Activated naive CD4-positive, alpha-beta T cell treated with anti-CD3 and anti-CD28 coated beads for 36 hours (primary cell): ENCODE measurements at regions of chr17 and their contacts with region 1.

Region 1: DNA sequence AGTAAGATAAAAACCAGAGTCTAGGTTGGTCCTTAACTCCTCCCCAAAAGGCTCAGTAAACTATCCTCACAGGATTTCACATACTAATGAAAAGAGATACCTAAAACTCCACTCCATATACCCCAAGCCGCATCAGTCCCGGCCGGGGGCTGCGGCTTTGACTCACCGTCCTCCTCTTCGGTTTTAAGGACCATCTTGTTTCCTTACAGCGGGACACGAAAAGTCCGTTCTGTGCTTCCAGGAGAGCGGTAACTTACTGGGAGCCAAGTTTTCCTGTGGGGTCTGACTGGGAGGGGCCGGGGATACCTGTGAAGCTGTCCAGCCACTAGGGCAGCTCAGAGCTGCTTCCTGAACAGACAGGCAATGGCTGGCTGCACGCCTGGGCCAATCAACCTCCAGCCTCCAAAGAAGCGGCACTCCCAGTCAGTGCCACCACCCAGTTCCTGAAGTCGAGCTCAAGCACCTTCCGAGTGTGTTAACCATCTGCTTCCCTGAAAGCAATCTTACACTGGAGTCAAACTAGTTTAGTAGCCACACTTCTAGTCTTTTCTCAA is 45.5 kb downstream of the CYTH1 start:
- DNase-seq: peak; percentile 84
- H3K4me3 Mint-ChIP-seq: peak overlapping the region; percentile 88
- H3K27ac Mint-ChIP-seq: peak overlapping the region; percentile 93
- H3K4me1 Mint-ChIP-seq: peaks cover 86% of the 10 kb centered on the region
- H3K27me3 Mint-ChIP-seq: no peaks in the 10 kb centered on the region

Region 2: GRCh38 chr17:78716814-78717393 is 19.7 kb before region 1 on chr17:
- CTCF ChIA-PET with region 1: interaction called, 14 read pairs
- intact Hi-C with region 1: loop called (anchors 1 kb)
- DNase-seq: peak; percentile 60
- H3K4me3 Mint-ChIP-seq: peak overlapping the region; percentile 59
- H3K27ac Mint-ChIP-seq: peak overlapping the region; percentile 90
- H3K4me1 Mint-ChIP-seq: peaks cover 89% of the 10 kb centered on the region
- H3K27me3 Mint-ChIP-seq: no peaks in the 10 kb centered on the region

Region 3: DNA sequence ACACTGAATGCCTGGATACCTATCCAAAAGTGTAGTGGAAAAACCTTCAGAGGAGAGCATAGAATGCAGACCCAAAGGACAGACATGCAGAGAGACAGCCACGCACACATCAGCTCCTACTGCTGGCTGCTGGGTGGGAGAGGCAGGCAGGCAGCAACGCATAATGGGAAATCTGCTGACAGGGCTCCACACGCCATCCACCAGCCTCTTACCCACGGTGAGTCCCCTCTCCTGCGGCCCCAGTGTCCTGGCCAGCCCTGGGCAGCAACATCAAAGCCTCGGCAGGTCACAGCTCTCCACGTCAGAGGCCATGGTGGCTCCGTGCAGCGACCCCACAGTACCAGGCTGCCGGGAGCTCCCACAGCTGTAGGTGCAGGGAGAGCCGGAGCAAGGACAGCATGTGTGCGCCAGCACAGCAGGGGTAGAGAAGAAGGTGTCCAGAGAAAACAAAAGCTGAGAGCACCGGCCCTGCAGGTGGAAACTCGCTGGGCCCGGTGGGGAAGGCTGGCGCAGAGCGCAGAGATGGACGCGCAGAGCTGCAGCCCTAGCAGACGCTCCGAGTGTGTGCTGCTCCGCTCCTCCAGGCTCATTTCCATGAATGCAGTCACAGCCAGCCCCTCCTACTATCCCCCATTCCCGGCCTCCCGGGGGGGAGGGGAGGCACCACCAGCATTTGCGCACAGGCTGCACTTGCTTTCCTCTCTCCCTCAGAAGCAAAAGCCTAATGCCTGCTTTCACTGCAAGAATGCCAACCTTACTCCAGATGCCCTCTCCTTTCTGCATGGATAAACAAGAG is 13.4 kb before region 1 on chr17:
- CTCF ChIA-PET with region 1: interaction called, 14 read pairs
- intact Hi-C with region 1: loop called (anchors 1 kb)
- DNase-seq: no peak
- H3K4me3 Mint-ChIP-seq: no peak overlapping the region
- H3K27ac Mint-ChIP-seq: peak overlapping the region; percentile 92
- H3K4me1 Mint-ChIP-seq: peaks cover 97% of the 10 kb centered on the region
- H3K27me3 Mint-ChIP-seq: no peaks in the 10 kb centered on the region

Region 4: DNA sequence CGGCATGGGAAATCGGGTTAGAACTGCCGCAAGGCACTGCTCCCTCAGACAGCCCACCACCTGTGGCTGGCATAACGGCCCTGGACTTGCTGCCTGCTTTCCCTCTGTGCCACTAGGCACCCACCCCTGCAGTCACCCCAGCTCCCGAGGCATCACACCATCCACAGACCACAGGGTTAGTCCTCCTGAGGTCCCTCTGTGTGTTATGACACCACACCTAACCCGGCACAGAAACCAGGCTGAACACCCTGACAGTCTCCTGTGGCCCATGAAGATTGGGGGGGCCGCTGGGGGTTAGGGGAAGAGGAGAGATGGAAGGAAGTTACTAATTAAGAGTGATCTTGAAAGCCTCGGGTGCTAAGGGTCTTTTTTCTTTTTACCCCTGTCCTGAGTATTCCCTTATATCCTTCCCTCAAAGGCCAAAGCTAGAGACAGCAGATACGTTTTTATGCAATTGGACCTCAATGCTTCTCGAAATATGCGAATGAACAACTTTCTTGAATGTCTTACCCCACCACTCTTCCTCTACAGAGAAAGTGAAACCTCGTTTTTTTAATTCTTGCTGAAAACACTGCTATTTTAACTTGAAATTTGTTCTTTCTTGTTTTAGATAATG is 38.5 kb after region 1 on chr17:
- CTCF ChIA-PET with region 1: interaction called, 5 read pairs
- intact Hi-C with region 1: loop called (anchors 5 kb)
- DNase-seq: peak; percentile 86
- H3K4me3 Mint-ChIP-seq: peak overlapping the region; percentile 82
- H3K27ac Mint-ChIP-seq: peak overlapping the region; percentile 97
- H3K4me1 Mint-ChIP-seq: peaks cover 65% of the 10 kb centered on the region
- H3K27me3 Mint-ChIP-seq: no peaks in the 10 kb centered on the region

Region 5: DNA sequence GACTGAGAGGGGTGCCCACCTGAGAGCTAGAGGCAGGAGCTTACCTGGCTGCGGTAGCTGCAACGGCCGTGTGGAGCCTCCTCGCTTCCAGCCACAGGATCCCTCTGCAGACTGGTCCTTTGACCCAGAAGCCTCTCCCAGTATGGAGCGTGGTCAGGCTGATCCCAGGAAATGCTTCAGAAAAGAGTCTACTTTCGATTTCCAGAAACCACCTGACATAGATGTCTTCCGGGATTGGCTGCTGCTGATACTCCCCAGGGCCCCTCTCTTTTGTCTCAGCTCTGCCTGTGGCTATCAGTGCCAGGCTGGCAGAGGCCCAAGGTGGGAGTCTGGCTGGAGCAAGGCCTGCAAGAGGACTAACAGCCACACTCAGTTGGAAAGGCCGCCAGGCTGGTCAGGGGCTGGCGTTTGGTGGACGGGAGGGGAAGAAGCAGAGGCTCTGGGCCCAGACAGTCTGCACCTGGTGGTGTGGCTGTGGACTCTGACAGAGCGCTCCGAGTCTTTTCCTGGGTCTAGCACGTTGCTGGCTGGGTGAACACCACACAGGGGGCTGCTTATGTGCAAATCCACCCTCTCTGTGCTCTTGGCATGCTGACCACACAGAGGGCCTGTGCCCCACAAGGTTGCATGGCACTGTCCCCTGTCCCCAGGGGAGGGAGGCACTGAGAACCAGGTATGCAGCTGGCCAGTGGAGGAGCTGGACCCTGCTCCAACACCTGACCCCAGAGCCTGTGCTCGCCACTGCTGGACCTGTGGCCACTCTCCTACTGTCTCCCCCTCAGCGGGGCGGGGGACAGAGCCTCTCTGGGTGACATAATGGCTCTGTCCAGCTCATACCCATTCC is 243.4 kb after region 1 on chr17 and contains the start of gene LGALS3BP:
- CTCF ChIA-PET with region 1: no interaction called
- intact Hi-C with region 1: no loop called
- DNase-seq: peak; percentile 59
- H3K4me3 Mint-ChIP-seq: peak within 1 kb of the TSS; percentile 74
- H3K27ac Mint-ChIP-seq: peak within 1 kb of the TSS; percentile 78
- H3K4me1 Mint-ChIP-seq: peaks cover 26% of the 10 kb centered on the region
- H3K27me3 Mint-ChIP-seq: no peaks in the 10 kb centered on the region
- total RNA-seq, gene LGALS3BP: 59.9 to 65.4 TPM